ENCODE measurements at regions of chr9 and their contacts with region 1.

Region 1: GRCh38 chr9:124852829-124853531 is at the start of gene WDR38:
- DNase-seq: peak; percentile 76
- H3K4me3 Mint-ChIP-seq: peak within 1 kb of the TSS; percentile 56
- H3K27ac Mint-ChIP-seq: no peak within 1 kb of the TSS
- H3K4me1 Mint-ChIP-seq: peaks cover 17% of the 10 kb centered on the region
- H3K27me3 Mint-ChIP-seq: peaks cover 10% of the 10 kb centered on the region
- total RNA-seq, gene WDR38: not detected

Region 2: GRCh38 chr9:124771021-124771866 is 81.7 kb before region 1 on chr9 and contains the start of gene NR6A1:
- CTCF ChIA-PET with region 1: interaction called, 264 read pairs
- POLR2A ChIA-PET with region 1: interaction called, 66 read pairs
- DNase-seq: peak; percentile 94
- H3K4me3 Mint-ChIP-seq: peak within 1 kb of the TSS; percentile 81
- H3K27ac Mint-ChIP-seq: peak within 1 kb of the TSS; percentile 73
- H3K4me1 Mint-ChIP-seq: peaks cover 45% of the 10 kb centered on the region
- H3K27me3 Mint-ChIP-seq: peaks cover 57% of the 10 kb centered on the region
- total RNA-seq, gene NR6A1: 0.28 to 0.76 TPM

Region 3: GRCh38 chr9:124839612-124840299 is 13.2 kb before region 1 on chr9:
- CTCF ChIA-PET with region 1: interaction called, 46 read pairs
- POLR2A ChIA-PET with region 1: no interaction called
- DNase-seq: no peak
- H3K4me3 Mint-ChIP-seq: no peak overlapping the region
- H3K27ac Mint-ChIP-seq: no peak overlapping the region
- H3K4me1 Mint-ChIP-seq: no peaks in the 10 kb centered on the region
- H3K27me3 Mint-ChIP-seq: peaks cover 17% of the 10 kb centered on the region

Region 4: GRCh38 chr9:124889006-124889405 is 36.0 kb after region 1 on chr9:
- CTCF ChIA-PET with region 1: interaction called, 15 read pairs
- POLR2A ChIA-PET with region 1: interaction called, 3 read pairs
- DNase-seq: no peak
- H3K4me3 Mint-ChIP-seq: no peak overlapping the region
- H3K27ac Mint-ChIP-seq: no peak overlapping the region
- H3K4me1 Mint-ChIP-seq: no peaks in the 10 kb centered on the region
- H3K27me3 Mint-ChIP-seq: no peaks in the 10 kb centered on the region

Region 5: DNA sequence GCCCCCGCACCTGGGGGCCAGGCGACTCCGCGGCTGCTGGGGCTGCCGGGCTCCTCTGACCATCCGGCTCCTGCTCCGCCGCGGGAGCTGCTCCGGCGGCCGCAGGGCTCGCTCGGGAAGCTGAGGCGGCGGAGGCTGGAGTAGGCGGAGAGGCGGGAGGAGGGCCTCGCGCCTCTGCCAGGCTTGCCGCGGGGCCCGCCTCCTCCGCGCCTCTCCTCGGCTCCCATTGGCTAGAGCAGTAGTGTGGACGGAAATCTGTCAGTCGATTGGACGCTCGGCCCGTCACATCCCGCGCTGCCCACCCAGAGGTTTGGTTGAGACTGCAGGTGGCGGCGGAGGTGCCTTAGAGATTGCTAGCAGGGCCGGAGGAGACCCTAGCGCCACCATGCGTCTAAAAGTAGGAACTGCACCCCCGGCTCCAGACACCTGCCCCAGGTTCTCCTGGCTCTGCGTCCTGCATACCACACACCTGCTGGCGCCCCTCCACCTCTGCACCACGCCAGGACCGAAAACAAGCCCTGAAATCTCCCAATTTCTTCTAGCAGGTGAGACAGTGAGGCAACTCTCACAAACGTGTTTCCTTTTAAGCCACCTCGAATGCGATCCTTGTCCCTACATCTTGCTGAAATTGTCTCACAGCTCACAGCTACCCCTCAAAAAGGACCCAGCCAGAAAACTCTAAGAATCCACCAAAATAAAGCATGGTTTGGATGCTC is 290.6 kb after region 1 on chr9 and contains the start of gene SCAI:
- CTCF ChIA-PET with region 1: interaction called, 17 read pairs
- POLR2A ChIA-PET with region 1: no interaction called
- DNase-seq: peak; percentile 99
- H3K4me3 Mint-ChIP-seq: peak within 1 kb of the TSS; percentile 89
- H3K27ac Mint-ChIP-seq: peak within 1 kb of the TSS; percentile 38
- H3K4me1 Mint-ChIP-seq: peaks cover 35% of the 10 kb centered on the region
- H3K27me3 Mint-ChIP-seq: no peaks in the 10 kb centered on the region
- total RNA-seq, gene SCAI: 7.9 to 8.5 TPM